GM10248 (cell line): ENCODE measurements at regions of chr9 and their contacts with region 1.

Region 1: GRCh38 chr9:127586537-127586936 is 25.5 kb upstream of the STXBP1 start:
- DNase-seq: peak; percentile 78
- CTCF ChIP-seq: peak; percentile 90

Region 2: DNA sequence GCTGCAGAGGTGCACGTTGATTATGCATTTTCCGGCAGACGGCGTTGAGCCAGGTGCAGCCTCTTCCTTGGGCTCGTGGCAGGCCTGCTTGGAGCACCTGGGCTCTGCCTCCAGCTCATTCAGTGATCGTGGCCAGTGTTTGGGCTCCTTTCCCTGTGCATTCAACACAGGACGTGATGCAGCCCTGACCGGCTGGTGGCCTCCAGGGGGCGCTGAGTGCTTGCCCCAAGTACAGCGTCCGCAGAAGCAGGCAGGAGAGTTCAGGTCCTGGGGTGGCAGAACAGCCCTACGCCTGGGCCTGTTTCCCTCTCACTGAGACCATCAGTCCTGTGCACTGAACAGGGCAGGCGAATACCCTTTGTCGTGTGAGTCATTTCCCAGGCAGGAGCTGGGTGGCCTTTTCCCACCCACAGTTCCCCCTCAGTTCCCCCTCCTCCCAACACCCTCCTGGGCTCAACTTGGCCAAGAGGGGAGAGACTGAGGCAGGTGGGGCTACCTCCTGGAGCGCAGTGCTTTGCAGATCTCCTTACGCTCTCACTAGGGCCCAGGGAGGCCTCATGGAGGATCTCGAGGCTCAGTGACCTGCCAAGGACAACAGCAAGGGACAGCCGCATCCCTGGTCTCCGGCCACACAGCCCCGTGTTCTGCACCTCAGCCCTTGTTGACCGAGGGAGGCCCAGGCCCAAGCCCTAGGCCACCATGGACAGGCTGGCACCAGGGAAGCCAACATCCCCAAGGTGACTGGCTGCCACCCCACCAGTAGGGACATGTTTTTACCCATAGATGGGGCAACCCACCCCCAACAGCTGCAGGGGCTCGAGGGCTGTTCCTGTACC is 82.4 kb before region 1 on chr9:
- CTCF ChIA-PET with region 1: interaction called, 21 read pairs
- POLR2A ChIA-PET with region 1: no interaction called
- DNase-seq: peak; percentile 78
- CTCF ChIP-seq: peak; percentile 92

Region 3: DNA sequence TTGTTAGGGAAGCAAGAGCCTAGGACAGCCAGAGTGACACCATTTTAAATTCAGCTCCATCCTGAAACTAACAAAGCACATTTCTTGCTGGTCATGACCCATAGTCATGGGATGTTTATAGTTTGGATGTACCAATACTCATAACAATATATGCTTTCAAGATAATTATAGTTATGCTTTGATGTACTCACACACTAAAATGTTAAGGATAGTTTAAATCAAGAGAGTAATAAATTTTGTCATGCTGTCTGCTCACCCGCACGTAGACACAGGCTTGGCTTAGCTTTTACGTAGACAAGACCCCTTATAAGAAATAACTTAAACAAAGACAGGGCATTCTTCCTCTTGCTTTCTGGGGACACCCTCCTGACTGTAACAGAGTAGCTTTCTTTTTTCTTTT is 16.7 kb after region 1 on chr9:
- CTCF ChIA-PET with region 1: interaction called, 19 read pairs
- POLR2A ChIA-PET with region 1: no interaction called
- DNase-seq: no peak
- CTCF ChIP-seq: no peak